ENCODE measurements at regions of chr9 and their contacts with region 1.

Region 1: DNA sequence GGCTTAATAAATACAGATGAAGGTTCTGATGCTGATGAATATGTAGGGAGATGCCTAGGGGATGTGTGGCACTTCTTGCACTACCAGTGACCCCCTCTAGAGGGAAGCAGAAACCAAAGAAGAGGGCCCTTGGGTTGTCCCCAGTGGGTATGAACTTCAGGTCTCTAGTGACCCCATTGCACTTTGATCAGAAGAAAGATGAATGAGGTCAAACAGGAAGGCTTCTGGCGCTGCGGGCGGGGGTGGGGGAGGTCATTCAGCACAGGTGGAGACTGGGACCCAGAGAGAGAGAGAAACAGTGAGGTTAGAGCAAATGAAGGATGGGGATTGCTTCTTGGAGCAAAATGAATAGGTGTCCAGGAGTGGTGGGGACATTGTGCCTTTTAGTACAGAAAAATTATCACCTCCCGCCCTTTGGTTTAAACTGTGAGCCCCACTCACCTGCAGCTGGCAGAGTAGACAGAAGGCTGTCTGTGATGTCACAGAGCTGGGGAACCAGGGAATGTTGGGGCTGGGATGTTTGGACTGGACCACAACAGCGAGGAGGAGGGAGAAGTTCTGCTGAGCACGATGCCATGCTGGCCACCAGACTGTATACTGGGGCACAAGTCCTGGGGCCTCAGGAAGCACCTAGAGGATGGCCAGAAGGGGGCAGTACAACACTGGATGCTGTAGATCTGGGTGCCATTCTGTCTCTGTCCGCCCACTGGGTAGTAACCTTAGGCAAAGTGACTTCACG is at the start of gene TEX48:
- DNase-seq: peak; percentile 80
- ATAC-seq: peak; percentile 99
- H3K4me3 ChIP-seq: no peak within 1 kb of the TSS
- H3K27ac ChIP-seq: no peak within 1 kb of the TSS
- H3K4me1 ChIP-seq: peaks cover 8% of the 10 kb centered on the region
- H3K27me3 ChIP-seq: no peaks in the 10 kb centered on the region
- CTCF ChIP-seq: peak; percentile 91
- EP300 ChIP-seq: no peak
- POLR2A ChIP-seq: no peak
- RAD21 ChIP-seq: peak; percentile 84
- total RNA-seq, gene TEX48: not detected in 2 replicates

Region 2: DNA sequence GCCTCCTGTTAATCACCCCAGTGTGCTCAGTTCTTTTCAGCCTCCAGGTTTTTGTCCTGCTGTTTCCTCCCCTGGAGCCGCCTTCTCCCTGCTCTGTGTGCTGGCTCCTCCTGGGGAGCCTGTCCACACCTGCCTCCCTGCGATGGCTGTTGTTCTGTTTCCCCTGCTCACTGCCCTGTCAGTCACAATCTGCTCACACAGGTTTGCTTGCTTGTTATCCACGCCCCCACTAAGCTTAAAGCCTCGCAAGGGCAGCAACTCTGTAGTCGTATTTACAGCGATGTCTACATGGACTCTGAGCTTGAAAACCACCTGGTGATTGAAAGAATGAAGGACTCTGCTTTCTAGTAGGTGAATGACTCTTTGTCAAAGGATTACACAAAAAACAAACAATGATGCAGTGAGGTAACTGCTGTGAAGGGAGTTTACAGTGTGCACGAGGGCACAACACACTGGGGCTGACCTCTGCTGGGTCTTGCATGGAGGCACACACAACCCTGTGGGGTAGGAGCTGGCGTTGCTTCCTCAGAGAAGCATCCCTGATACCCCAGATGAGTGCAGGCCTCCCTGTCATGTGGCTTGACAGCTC is 39.8 kb after region 1 on chr9:
- CTCF ChIA-PET with region 1: interaction called, 9 read pairs
- POLR2A ChIA-PET with region 1: no interaction called
- in situ Hi-C with region 1: no loop called
- intact Hi-C with region 1: loop called (anchors 1 kb)
- DNase-seq: peak; percentile 99
- ATAC-seq: peak; percentile 98
- H3K4me3 ChIP-seq: peak overlapping the region in 1 of 3 experiments; percentile 59; a peak in 2 of 6 replicates
- H3K27ac ChIP-seq: peak overlapping the region; percentile 64
- H3K4me1 ChIP-seq: peaks cover 47% of the 10 kb centered on the region
- H3K27me3 ChIP-seq: peaks cover 0 to 5% of the 10 kb centered on the region in 2 experiments; a peak in 3 of 5 replicates
- CTCF ChIP-seq: peak; percentile 65
- EP300 ChIP-seq: peak; percentile 91 to 95
- POLR2A ChIP-seq: peak; percentile 39 to 50; a peak in 2 of 4 replicates
- RAD21 ChIP-seq: peak; percentile 72

Region 3: GRCh38 chr9:114738581-114739316 is 57.0 kb after region 1 on chr9:
- CTCF ChIA-PET with region 1: interaction called, 7 read pairs
- POLR2A ChIA-PET with region 1: no interaction called
- in situ Hi-C with region 1: no loop called
- intact Hi-C with region 1: loop called (anchors 1 kb)
- DNase-seq: peak; percentile 46
- ATAC-seq: peak; percentile 93
- H3K4me3 ChIP-seq: no peak overlapping the region
- H3K27ac ChIP-seq: no peak overlapping the region
- H3K4me1 ChIP-seq: peaks cover 5% of the 10 kb centered on the region; the same call in 1 of the 2 replicates
- H3K27me3 ChIP-seq: no peaks in the 10 kb centered on the region
- CTCF ChIP-seq: peak; percentile 90
- EP300 ChIP-seq: no peak
- POLR2A ChIP-seq: no peak
- RAD21 ChIP-seq: peak; percentile 85

Region 4: GRCh38 chr9:115524453-115525059 is 842.8 kb after region 1 on chr9:
- CTCF ChIA-PET with region 1: interaction called, 3 read pairs
- POLR2A ChIA-PET with region 1: no interaction called
- in situ Hi-C with region 1: loop called (anchors 10 kb)
- intact Hi-C with region 1: loop called (anchors 5 kb)
- DNase-seq: peak; percentile 32
- ATAC-seq: peak; percentile 55; the same call in 2 of the 3 replicates
- H3K4me3 ChIP-seq: no peak overlapping the region
- H3K27ac ChIP-seq: no peak overlapping the region
- H3K4me1 ChIP-seq: no peaks in the 10 kb centered on the region
- H3K27me3 ChIP-seq: no peaks in the 10 kb centered on the region; a peak in 1 of 5 replicates
- CTCF ChIP-seq: peak; percentile 71
- EP300 ChIP-seq: no peak
- POLR2A ChIP-seq: no peak
- RAD21 ChIP-seq: peak; percentile 60